Cardiac septum (tissue), 1 donor: ENCODE measurements at regions of chr12 and their contacts with region 1.

Region 1: GRCh38 chr12:122021822-122022526 is at the start of gene BCL7A:
- DNase-seq: no peak
- total RNA-seq, gene BCL7A: 18.2 TPM

Region 2: GRCh38 chr12:121536899-121537813 is 484.8 kb before region 1 on chr12:
- intact Hi-C with region 1: no loop called
- DNase-seq: peak; percentile 97

Region 3: GRCh38 chr12:121719926-121720414 is 302.0 kb before region 1 on chr12:
- intact Hi-C with region 1: no loop called
- DNase-seq: no peak

Region 4: GRCh38 chr12:121748571-121749253 is 273.3 kb before region 1 on chr12:
- intact Hi-C with region 1: no loop called
- DNase-seq: no peak

Region 5: GRCh38 chr12:121917979-121918678 is 103.8 kb before region 1 on chr12 and contains the start of gene CFAP251:
- intact Hi-C with region 1: loop called (anchors 5 kb)
- DNase-seq: peak; percentile 98
- total RNA-seq, gene CFAP251: 3.8 TPM

Region 6: GRCh38 chr12:121964813-121965643 is 56.9 kb before region 1 on chr12:
- intact Hi-C with region 1: loop called (anchors 5 kb)
- DNase-seq: no peak

Region 7: GRCh38 chr12:122064025-122064777 is 42.2 kb after region 1 on chr12:
- intact Hi-C with region 1: no loop called
- DNase-seq: peak; percentile 89